ENCODE measurements at regions of chr6 and their contacts with region 1.

Region 1: GRCh38 chr6:47309291-47310130 is at the start of gene TNFRSF21:
- DNase-seq: peak; percentile 92
- H3K4me3 ChIP-seq: peak within 1 kb of the TSS; percentile 77
- H3K27ac ChIP-seq: no peak within 1 kb of the TSS
- H3K4me1 ChIP-seq: no peaks in the 10 kb centered on the region
- H3K27me3 ChIP-seq: peaks cover 22% of the 10 kb centered on the region
- total RNA-seq, gene TNFRSF21: 2.9 and 3.9 TPM in 2 replicates

Region 2: DNA sequence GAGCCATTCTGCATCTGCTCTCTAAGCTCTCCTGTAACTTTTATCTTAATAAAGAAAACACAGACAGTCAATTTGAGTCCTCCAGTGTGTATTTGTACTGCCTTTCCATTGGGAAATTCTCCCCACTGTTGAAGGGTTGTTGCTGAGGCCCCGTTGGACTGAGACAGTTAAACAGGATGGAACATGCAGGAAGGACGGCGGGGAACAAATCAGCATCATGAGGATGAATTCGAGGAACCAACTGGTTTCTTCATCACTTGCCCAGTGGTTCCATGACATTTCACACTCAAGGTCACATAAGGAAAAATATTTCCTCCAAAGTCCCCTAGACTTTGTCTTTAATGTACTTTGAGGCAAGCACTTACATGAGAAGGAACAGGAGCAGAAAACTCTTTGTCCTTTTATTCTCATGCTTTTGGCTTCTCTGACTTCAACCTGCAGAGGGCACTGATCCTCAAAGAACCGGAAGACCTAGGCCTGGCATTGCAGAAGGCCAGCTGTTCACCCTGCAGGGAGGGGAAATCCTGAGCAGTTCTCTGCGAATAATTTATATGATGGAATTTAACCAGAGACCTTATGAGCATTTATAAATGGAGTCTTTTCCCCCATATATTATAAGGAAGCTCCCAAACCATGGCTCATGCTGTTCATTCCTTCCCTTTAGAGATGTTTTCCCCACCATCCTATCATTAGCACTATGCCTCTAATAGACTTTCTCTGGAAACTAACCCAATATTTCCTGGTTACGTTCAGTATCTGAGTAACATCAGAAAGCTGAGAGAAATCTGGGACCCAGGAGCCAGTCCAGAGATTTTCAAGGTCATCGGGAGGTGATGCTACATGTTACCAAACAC is 212.2 kb before region 1 on chr6:
- in situ Hi-C with region 1: loop called (anchors 10 kb)
- DNase-seq: peak; percentile 81
- H3K4me3 ChIP-seq: no peak overlapping the region
- H3K27ac ChIP-seq: no peak overlapping the region
- H3K4me1 ChIP-seq: no peaks in the 10 kb centered on the region
- H3K27me3 ChIP-seq: no peaks in the 10 kb centered on the region